Endothelial cell of umbilical vein (primary cell): ENCODE measurements at regions of chr7 and their contacts with region 1.

Region 1: DNA sequence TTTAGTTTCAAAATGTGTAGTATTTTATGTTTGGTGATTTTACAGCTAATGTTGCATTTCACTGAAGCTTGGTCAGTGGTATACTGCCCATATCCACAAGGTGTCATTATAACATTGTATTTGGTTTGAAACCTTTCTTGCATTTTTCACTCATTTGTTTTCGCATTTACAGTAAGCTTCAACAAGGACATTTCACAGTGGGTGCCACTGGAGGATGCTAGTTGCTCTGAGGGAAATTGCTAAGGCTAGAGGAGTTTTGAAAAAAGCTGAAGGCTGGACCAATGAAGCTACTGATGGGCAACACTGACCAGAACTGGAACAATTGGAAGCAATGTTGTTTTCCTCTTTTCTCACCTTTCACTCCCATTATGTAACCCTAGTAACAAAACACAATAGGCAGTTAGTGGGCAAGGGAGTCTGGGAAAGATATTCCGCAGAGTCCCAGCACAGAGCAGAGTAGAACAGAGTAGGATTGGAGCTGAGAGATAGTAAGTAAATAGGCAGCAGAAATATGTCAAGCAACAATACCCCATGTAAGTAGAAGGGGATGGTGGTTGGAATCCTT is 23.6 kb upstream of the SRI start:
- DNase-seq: peak; percentile 75
- H3K4me3 ChIP-seq: no peak overlapping the region
- H3K27ac ChIP-seq: no peak overlapping the region
- H3K4me1 ChIP-seq: no peaks in the 10 kb centered on the region
- H3K27me3 ChIP-seq: peaks cover 0 to 2% of the 10 kb centered on the region in 2 experiments
- CTCF ChIP-seq: peak; percentile 46 to 52
- POLR2A ChIP-seq: no peak

Region 2: DNA sequence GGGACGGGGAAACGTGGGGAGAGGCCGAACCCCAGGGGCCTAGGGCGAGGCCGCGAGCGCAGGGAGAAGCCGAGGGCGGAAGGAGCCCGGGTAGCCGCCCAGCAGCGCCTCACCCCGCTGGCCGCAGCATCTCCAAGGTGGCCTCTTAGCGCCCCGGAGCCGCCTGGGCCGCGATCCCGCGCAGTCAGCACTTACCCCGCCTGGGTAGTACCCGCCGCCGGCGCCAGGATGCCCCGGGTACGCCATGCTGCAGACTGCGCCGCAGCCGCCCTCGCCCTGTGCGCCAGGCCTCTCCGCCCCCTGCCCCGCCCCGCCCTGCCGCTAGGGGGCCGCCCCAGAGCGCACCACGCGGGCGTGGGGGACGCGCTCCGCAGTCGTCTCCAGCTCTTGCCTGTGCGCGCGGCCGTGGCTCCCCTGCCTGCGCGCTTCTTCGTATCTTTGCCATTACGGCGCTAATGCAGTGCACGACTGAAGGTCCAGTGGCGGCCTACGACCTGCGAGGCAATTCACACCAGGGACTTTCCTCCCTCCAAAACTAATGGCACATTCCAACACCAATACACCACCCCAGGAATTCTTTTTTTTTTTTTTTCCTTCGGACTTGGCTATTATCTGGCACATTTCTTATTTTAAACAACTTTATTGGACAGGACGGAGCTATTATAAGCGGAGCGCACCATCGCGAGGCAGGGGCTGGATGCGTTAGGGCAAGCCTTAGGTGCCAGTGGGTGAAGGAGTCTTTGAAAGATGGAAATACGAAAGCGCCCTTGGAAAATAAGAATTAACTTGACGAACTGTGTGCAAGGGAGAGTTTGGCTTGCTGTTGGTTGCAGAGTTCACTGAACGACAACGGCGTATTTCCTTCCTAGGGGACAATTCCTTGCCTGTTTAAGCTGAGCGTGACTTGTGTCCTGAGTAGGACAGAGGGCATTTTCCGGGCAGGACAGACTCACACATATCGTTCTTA is 23.4 kb before region 1 on chr7 and contains the start of gene SRI:
- CTCF ChIA-PET with region 1: interaction called, 15 read pairs
- POLR2A ChIA-PET with region 1: interaction called, 3 read pairs
- dilution Hi-C with region 1: no loop called
- intact Hi-C with region 1: no loop called
- DNase-seq: peak; percentile 88
- H3K4me3 ChIP-seq: peak within 1 kb of the TSS; percentile 81 to 94 (median 93)
- H3K27ac ChIP-seq: peak within 1 kb of the TSS; percentile 94
- H3K4me1 ChIP-seq: peaks cover 13% of the 10 kb centered on the region
- H3K27me3 ChIP-seq: no peaks in the 10 kb centered on the region
- CTCF ChIP-seq: peak; percentile 57 to 62
- POLR2A ChIP-seq: peak; percentile 82
- total RNA-seq, gene SRI: 191 and 204 TPM in 2 replicates

Region 3: GRCh38 chr7:88357781-88358525 is 114.5 kb after region 1 on chr7:
- CTCF ChIA-PET with region 1: interaction called, 9 read pairs
- POLR2A ChIA-PET with region 1: no interaction called
- dilution Hi-C with region 1: no loop called
- intact Hi-C with region 1: loop called (anchors 1 kb)
- DNase-seq: no peak
- H3K4me3 ChIP-seq: no peak overlapping the region
- H3K27ac ChIP-seq: no peak overlapping the region
- H3K4me1 ChIP-seq: no peaks in the 10 kb centered on the region
- H3K27me3 ChIP-seq: peaks cover 2 to 5% of the 10 kb centered on the region in 2 experiments
- CTCF ChIP-seq: peak in 1 of 2 donors; percentile 26
- POLR2A ChIP-seq: no peak

Region 4: GRCh38 chr7:88789480-88790064 is 546.1 kb after region 1 on chr7:
- CTCF ChIA-PET with region 1: interaction called, 7 read pairs
- POLR2A ChIA-PET with region 1: no interaction called
- dilution Hi-C with region 1: no loop called
- intact Hi-C with region 1: loop called (anchors 2 kb)
- DNase-seq: peak; percentile 42
- H3K4me3 ChIP-seq: no peak overlapping the region
- H3K27ac ChIP-seq: no peak overlapping the region
- H3K4me1 ChIP-seq: no peaks in the 10 kb centered on the region
- H3K27me3 ChIP-seq: peaks cover 2 to 3% of the 10 kb centered on the region in 2 experiments
- CTCF ChIP-seq: peak; percentile 14 to 24
- POLR2A ChIP-seq: no peak

Region 5: DNA sequence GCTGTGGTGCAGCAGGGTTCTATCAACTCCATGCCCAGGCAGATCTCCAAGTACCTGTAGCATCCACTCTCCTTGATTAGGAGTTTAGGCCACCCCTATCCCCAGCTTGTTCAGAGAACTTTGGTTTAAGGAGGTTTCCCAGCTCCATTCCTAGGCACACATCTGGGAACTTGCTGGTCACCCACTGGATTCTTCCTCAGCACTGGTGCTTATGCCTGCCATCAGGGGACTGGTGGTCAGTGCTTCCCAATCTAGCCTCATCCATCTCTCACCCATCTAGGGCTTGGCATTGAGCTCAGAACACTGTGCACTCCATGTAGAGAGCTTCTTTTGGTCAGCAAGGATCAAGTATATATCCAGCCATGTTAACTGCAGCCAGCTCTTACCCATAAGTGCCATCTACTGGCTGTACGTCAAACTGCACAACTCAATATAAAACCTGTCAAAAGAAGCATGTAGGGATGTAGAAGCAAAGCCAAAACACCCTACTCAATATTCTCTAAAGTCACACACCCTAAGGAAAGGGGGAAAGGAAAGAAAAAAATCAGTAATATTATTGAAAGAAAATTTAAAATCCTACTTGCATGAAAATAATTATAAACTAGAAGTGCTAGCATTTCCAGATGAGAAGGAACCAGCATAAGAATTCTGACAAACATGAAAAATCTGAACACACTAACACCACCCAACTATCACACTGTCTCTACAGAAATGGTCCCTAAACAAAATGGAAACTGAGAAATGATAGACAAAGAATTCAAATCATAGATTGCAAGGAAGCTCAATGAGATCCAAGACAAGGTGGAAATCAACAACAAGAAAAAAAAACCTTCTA is 1379.6 kb after region 1 on chr7:
- CTCF ChIA-PET with region 1: interaction called, 21 read pairs
- POLR2A ChIA-PET with region 1: no interaction called
- dilution Hi-C with region 1: no loop called
- intact Hi-C with region 1: no loop called
- DNase-seq: peak; percentile 25
- H3K4me3 ChIP-seq: no peak overlapping the region
- H3K27ac ChIP-seq: no peak overlapping the region
- H3K4me1 ChIP-seq: no peaks in the 10 kb centered on the region
- H3K27me3 ChIP-seq: no peaks in the 10 kb centered on the region
- CTCF ChIP-seq: peak; percentile 33 to 52
- POLR2A ChIP-seq: no peak